ENCODE measurements at regions of chr12 and their contacts with region 1.

Region 1: GRCh38 chr12:13613297-13613696 is 368.1 kb downstream of the GRIN2B start:
- DNase-seq: no peak
- CTCF ChIP-seq: no peak

Region 2: DNA sequence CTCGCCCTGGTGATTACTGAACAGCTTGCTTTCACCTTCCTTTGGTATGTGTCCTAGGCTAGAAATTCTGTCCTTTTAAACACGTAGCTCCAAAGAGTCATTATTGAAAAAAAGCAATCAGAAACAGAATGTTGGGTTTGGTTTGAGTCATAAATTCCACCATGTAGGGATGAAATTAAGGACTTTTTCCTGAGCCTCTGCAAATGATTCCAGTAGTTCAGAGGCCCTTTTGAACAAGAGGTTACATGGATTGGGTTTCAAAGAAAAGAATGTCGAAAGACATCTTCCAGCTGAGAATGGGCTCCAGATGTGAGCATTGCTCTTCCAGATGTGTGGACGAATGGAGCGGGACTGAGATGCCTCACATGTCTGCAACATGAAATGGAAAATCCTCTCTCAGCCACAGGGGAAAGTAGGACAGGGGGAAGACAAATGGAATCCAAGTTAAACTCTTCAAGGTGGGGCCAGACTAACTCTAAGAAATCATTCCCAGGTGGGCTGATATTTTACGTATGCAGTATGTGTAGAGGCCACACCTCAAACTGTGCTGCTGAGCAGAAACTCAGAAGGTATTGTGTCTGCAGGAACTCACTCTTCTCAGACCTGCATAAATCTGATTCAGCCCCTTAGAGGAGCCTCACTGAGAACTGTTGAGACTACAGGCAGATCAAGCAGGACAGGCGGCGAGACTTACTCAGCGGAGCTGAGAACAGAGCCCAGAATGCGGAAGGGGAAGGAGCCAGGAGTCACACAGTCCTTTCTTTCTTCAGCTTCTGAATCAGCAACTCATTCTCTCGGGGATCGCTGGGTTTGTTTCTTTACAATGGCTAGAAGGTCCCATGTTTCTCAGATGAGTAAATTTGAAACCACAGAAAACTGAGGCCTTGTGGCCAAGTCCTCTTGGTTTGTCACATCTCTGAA is 440.0 kb before region 1 on chr12:
- CTCF ChIA-PET with region 1: no interaction called
- POLR2A ChIA-PET with region 1: no interaction called
- DNase-seq: peak; percentile 72
- CTCF ChIP-seq: no peak

Region 3: GRCh38 chr12:13602172-13602571 is 11.1 kb before region 1 on chr12:
- CTCF ChIA-PET with region 1: interaction called, 13 read pairs
- POLR2A ChIA-PET with region 1: no interaction called
- DNase-seq: no peak
- CTCF ChIP-seq: no peak

Measured in GM10248 (cell line).